GM18951 (cell line): ENCODE measurements at regions of chr17 and their contacts with region 1.

Region 1: GRCh38 chr17:13594762-13595598 is 6.7 kb downstream of the HS3ST3A1 start:
- POLR2A ChIP-seq: no peak

Region 2: GRCh38 chr17:13374203-13375143 is 220.5 kb before region 1 on chr17:
- in situ Hi-C with region 1: no loop called
- POLR2A ChIP-seq: no peak

Region 3: DNA sequence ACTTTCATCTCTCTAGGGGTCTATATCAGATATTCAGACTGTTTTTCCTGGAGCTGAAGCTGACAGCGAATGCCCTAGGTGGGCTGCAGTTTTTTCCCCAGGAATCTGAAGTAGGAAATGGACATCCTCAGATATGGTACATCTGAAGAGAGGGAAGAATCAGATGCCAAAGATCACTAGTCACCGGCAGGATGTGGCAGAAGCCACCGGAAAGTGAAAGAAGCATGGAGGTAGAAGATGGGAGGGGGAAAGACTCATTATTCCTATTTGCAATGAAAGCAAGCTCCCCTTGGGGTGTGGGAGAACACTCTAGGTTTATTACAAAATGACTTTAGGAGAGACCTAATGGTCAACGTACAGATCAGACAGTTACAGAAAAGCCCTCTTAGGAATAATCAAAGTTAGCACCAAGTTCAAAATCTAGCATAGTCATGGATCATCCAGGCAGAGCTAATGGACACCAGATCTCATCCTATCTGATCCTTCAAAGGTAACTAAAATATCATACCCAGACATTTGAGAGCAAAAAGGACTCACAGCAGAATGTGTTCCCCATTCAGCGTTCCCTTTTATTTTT is 104.0 kb before region 1 on chr17:
- in situ Hi-C with region 1: no loop called
- POLR2A ChIP-seq: no peak

Region 4: GRCh38 chr17:14300575-14301278 is 705.7 kb after region 1 on chr17 and contains the start of gene HS3ST3B1:
- in situ Hi-C with region 1: loop called (anchors 25 kb)
- POLR2A ChIP-seq: peak; percentile 24

Region 5: DNA sequence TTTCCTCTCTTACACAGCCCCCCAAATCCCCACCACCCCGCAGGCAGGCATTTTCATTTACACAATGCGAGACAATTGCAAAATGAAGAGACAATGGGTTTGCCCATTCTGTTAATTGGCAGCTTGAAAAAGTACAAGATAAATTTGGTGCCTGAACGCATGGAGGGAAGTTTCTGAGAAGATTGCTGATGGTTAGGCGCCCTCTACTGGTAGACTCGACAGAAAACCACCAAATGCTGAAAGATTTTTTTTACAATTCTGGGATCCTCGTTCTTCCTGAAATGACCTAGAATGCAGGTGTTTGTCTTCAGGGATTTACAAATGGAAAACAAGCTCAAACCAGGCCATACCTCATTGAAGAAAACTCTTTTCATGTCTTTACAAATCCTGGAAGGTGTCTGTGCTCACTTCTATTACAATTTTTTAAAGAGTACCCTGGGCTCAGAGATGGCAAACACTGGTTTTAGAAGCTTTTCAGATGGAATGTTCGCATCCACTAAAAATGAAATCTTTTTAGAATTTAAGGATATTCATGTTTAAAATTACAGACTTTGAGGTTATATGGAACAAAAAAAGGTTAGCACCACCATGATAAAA is 1331.6 kb after region 1 on chr17:
- in situ Hi-C with region 1: loop called (anchors 10 kb)
- POLR2A ChIP-seq: no peak